HEK293T (cell line): ENCODE measurements at regions of chr2 and their contacts with region 1.

Region 1: DNA sequence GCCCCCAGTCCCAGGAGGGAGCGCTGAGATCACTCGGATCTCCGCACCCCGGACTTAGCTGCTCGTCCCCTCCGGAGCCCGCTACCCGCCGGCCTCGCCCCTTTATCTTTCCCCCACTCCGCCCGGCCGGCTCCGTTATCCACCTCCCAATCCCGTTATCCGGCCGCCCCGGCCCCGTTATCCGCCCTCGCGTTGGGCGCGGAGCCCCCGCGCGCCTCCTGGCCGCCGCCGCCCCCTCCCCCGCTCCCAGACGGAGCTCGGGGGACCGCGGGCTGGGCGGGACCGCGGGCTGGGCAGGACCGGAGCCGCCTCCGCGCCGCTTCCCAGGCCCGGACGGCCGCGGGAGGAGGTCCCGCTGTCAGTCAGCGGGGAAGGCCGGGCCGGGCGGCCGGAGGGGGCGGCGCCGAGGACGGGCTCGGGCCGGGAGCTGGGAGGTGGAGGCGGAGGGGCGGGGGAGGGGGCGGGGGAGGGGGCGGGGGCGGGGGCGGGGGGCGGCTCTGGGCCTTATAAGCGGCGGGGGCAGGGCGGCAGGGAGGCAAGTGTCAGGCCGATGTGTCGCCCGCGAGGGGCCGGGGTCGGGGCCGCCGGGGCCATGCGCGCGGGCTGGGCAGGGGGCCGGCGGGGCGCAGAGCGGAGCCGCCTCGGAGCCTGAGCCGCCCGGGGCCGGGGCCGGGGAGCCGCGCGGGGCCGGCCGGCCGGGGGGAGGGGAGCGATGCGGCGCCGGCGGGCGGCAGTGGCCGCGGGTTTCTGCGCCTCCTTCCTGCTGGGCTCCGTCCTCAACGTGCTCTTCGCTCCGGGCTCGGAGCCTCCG is at the start of gene PKDCC:
- DNase-seq: peak; percentile 90

Region 2: GRCh38 chr2:42025151-42025582 is 22.5 kb before region 1 on chr2:
- CTCF ChIA-PET with region 1: interaction called, 4 read pairs
- POLR2A ChIA-PET with region 1: interaction called, 18 read pairs
- DNase-seq: peak; percentile 54

Region 3: DNA sequence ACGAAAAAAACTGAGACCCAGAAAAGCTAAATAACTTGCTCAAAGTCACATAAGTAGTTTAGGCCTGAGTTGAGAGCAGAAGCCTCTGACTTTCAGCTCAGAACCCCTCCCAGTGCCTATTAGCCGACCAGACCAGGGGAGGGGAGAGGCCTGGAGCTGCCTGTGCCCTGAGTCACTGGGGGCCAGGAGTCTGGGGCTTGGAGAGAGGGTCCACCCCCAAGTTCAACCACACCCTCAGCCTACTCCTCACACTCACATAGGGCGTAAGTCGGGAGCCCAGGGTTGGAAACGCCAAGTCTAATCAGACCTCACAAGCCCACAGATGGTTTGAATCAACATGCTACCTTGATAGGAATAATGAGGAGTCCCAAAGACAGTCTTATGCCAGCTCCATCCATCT is 12.5 kb before region 1 on chr2:
- CTCF ChIA-PET with region 1: interaction called, 5 read pairs
- POLR2A ChIA-PET with region 1: interaction called, 12 read pairs
- DNase-seq: no peak

Region 4: DNA sequence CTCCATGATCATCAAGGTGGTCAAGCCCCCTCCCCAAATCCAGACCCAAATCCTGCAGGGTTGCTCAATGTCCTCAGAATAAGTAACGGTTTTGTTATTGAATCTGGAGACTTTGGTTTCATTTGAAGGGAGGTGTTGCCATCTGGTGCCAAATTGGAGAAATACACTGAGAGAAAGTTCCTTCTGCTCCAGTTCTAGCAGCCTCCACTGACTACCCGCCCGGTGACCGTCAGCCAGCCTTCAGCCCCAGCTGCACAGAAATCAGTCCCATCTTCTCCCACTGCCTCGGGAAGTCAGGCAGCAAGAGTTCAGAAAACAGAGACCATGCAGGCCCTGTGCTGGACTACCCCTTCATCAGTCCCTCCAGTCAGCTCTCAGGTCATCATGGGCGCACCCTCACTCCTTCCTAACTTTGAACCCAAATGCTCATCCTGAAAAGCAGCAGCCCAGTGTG is 38.8 kb after region 1 on chr2:
- CTCF ChIA-PET with region 1: interaction called, 4 read pairs
- POLR2A ChIA-PET with region 1: interaction called, 23 read pairs
- DNase-seq: peak; percentile 73

Region 5: GRCh38 chr2:42102024-42102590 is 54.4 kb after region 1 on chr2:
- CTCF ChIA-PET with region 1: no interaction called
- POLR2A ChIA-PET with region 1: no interaction called
- DNase-seq: no peak

Region 6: GRCh38 chr2:42117923-42118753 is 70.4 kb after region 1 on chr2:
- CTCF ChIA-PET with region 1: no interaction called
- POLR2A ChIA-PET with region 1: no interaction called
- DNase-seq: no peak